ENCODE measurements at regions of chr11 and their contacts with region 1.

Region 1: DNA sequence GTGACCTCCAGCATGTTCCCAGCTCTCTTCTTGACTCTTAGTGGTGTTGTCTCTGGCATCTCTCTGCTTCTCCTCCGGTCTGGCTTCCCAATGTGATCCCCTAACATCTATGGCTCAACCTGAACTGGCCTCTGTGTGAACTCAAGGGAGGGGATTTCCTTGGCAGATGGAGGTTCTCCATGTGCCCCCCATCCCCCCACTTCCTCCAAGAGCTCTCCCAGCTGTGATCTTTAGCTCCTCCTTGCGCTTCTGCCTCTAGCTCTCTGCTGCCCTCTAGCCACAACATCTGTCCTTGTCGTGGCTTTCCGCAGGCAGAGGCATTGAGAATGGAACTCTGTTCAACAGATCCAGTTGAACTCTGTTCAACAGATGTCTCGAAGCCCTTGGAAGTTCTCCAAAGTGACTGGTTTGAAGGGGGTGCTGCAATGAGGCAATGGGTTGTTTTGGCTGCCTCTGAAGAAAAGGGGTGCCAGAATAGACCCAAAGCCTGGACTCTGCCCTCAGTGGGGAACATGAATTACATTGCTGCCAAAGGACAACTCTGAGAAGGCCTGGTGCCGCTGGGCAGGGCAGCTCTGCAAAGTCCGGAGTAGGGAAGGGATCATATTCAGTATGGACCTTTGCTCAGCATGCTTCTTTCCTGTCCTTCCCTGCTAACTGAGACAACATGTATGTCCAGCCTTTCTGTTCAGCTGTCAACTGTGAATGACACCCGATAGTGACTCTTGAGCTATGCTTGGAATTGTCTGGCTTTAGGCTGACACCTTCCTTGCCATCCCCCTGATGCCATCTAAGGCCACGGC is 61.9 kb downstream of the ADM start:
- DNase-seq: peak; percentile 79
- H3K4me3 Mint-ChIP-seq: no peak overlapping the region
- H3K27ac Mint-ChIP-seq: no peak overlapping the region
- H3K4me1 Mint-ChIP-seq: peaks cover 6% of the 10 kb centered on the region
- H3K27me3 Mint-ChIP-seq: peaks cover 3% of the 10 kb centered on the region

Region 2: GRCh38 chr11:10351768-10352641 is 14.8 kb before region 1 on chr11:
- CTCF ChIA-PET with region 1: interaction called, 29 read pairs
- POLR2A ChIA-PET with region 1: no interaction called
- intact Hi-C with region 1: no loop called
- DNase-seq: no peak
- H3K4me3 Mint-ChIP-seq: no peak overlapping the region
- H3K27ac Mint-ChIP-seq: no peak overlapping the region
- H3K4me1 Mint-ChIP-seq: no peaks in the 10 kb centered on the region
- H3K27me3 Mint-ChIP-seq: peaks cover 17% of the 10 kb centered on the region

Region 3: GRCh38 chr11:10379022-10379421 is 12.3 kb after region 1 on chr11:
- CTCF ChIA-PET with region 1: interaction called, 11 read pairs
- POLR2A ChIA-PET with region 1: no interaction called
- intact Hi-C with region 1: no loop called
- DNase-seq: no peak
- H3K4me3 Mint-ChIP-seq: no peak overlapping the region
- H3K27ac Mint-ChIP-seq: no peak overlapping the region
- H3K4me1 Mint-ChIP-seq: no peaks in the 10 kb centered on the region
- H3K27me3 Mint-ChIP-seq: peaks cover 11% of the 10 kb centered on the region

Measured in activated CD4-positive, alpha-beta memory T cell treated with anti-CD3 and anti-CD28 coated beads for 36 hours (primary cell).